MCF 10A (cell line): ENCODE measurements at regions of chr1 and their contacts with region 1.

Region 1: DNA sequence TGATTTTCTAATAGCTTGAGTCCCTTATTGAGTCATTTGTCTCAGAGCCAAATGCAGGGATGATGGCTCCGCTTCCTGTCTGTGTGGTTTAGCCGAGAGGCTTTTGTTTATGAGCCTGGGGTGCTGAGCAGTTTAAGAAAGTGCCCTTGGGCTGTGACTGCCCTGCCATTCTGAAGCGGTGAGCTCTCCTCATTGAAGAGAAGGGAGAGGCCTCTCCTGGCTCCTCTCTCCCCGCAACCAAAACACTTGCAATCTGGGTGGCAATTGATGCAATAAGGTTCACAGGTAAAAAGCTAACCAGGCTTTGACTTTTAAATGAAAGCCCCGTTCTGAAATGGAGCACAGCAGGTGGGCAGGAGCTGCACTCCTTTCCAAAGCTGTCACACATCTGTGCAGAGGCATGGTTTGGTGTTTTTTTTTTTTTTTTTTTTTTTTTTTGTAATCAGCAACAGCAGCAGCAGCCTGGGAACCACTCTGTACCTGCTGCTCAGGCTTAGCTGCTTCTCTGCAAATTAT is 403.7 kb downstream of the SIPA1L2 start:
- DNase-seq: peak; percentile 96
- H3K4me3 Mint-ChIP-seq: peak overlapping the region; percentile 5
- H3K27ac Mint-ChIP-seq: peak overlapping the region; percentile 10
- H3K4me1 Mint-ChIP-seq: peaks cover 52% of the 10 kb centered on the region
- H3K27me3 Mint-ChIP-seq: no peaks in the 10 kb centered on the region
- CTCF ChIP-seq: no peak

Region 2: DNA sequence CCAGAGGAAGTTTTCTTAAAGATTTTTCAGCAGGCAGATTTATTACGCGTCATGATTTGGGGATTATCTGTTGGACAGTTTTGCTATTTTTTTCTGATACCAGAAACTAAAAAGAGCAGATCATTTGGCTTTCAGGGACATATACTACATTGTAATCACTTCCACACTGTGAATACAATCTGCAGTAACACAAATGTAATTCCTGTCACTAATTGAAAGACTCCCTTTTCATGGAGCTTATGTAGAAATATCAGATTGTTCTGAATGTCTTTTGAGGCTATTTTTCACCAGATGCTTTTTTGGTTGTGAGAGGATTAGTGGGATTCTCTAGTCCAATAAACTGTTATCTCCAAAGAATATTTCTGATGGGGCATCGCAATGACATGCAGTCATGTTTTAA is 135.4 kb before region 1 on chr1:
- CTCF ChIA-PET with region 1: no interaction called
- POLR2A ChIA-PET with region 1: no interaction called
- intact Hi-C with region 1: no loop called
- DNase-seq: no peak
- H3K4me3 Mint-ChIP-seq: no peak overlapping the region
- H3K27ac Mint-ChIP-seq: no peak overlapping the region
- H3K4me1 Mint-ChIP-seq: no peaks in the 10 kb centered on the region
- H3K27me3 Mint-ChIP-seq: no peaks in the 10 kb centered on the region
- CTCF ChIP-seq: no peak

Region 3: DNA sequence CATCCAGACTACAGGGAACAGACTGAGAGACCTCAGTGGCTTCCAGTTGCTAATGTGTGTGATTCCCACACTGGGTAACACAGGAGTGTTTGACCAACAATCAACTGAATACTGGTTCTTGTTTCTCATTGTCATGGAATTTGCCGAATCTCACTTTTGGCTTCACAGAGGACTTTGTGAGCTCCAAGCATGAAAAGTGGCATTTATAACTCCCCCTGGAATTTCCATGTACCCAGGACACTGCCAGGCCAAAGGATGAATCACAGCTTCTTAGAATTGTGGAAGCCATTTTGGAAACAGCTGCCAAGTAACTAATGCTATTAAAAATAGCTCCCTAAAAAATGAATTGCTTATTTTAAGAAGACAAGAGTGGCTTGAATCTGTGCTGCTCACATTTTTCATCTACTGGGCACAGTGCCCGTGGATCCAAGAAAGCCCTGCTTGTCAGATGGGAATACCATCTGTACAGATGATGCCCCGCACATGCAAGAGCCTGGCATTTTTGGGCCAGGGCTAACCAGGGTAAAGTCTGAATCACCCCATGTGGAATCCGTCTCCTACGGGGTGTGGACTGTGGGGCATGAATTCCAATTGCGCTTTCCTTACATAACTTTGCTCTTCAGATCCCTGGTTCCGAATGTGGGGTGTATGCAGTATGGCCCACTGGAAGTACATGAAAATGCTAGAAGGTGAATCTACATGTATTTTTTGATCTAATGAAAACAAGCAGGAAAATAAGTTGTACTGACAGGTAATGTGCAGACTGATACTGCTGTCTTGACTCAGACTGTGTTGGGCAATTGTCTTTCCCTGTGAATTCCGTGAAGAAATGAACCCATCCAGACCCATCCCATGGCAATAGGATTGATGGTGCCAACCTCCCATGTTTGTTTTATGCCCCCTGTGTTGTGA is 83.6 kb before region 1 on chr1:
- CTCF ChIA-PET with region 1: interaction called, 3 read pairs
- POLR2A ChIA-PET with region 1: interaction called, 17 read pairs
- intact Hi-C with region 1: loop called (anchors 1 kb)
- DNase-seq: peak; percentile 98
- H3K4me3 Mint-ChIP-seq: peak overlapping the region; percentile 36
- H3K27ac Mint-ChIP-seq: peak overlapping the region; percentile 82
- H3K4me1 Mint-ChIP-seq: peaks cover 28% of the 10 kb centered on the region
- H3K27me3 Mint-ChIP-seq: no peaks in the 10 kb centered on the region
- CTCF ChIP-seq: no peak

Region 4: DNA sequence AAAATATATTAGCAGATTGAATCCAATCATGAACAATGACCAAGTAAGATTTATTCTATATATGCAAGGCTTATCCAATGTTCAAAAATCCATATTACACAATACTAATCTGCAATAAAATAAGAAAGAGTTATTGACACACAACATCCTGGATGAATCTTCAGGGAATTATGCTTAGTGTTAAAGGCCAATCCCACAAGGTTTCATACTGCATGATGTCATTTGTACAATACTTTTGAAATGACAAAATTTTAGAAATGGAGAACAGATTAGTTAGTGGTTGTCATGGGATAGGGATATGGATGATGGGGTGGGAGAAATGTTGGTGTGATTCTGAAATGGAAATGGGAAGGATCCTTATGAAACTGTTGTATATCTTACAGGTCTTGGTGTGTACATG is 22.0 kb before region 1 on chr1:
- CTCF ChIA-PET with region 1: interaction called, 4 read pairs
- POLR2A ChIA-PET with region 1: interaction called, 17 read pairs
- intact Hi-C with region 1: no loop called
- DNase-seq: no peak
- H3K4me3 Mint-ChIP-seq: no peak overlapping the region
- H3K27ac Mint-ChIP-seq: no peak overlapping the region
- H3K4me1 Mint-ChIP-seq: no peaks in the 10 kb centered on the region
- H3K27me3 Mint-ChIP-seq: no peaks in the 10 kb centered on the region
- CTCF ChIP-seq: no peak

Region 5: GRCh38 chr1:232292818-232293217 is 66.6 kb after region 1 on chr1:
- CTCF ChIA-PET with region 1: interaction called, 18 read pairs
- POLR2A ChIA-PET with region 1: interaction called, 45 read pairs
- intact Hi-C with region 1: no loop called
- DNase-seq: peak; percentile 80
- H3K4me3 Mint-ChIP-seq: peak overlapping the region; percentile 46
- H3K27ac Mint-ChIP-seq: peak overlapping the region; percentile 26
- H3K4me1 Mint-ChIP-seq: peaks cover 49% of the 10 kb centered on the region
- H3K27me3 Mint-ChIP-seq: no peaks in the 10 kb centered on the region
- CTCF ChIP-seq: peak; percentile 8